IMR-90 (cell line): ENCODE measurements at regions of chr13 and their contacts with region 1.

Region 1: DNA sequence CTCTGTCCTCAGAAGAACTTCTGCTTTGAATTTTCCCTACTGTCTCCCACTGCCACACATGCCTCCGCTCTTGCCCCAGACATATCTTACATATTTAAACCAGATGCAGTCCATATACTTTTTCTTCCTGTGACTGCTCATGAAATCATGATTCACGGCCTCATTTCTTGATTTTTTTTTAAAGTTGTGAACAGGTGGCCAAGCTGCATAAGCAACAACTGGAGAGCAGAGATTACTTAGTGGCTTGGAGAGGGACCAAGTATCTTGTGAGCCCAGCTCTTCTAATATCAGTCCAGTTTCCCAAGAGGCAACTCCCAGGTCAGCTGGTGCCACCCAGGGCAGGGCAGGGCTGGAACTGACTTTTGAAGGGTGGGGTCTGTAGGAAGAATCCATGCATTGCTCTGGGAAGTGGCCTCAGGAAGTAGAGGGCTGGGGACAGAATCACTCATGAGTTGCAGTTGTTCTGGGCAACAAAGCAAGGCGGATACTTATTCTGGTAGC is 152.4 kb downstream of the LMO7 start:
- DNase-seq: peak; percentile 96
- ATAC-seq: peak; percentile 54
- H3K4me3 ChIP-seq: no peak overlapping the region
- H3K27ac ChIP-seq: peak overlapping the region; percentile 78
- H3K4me1 ChIP-seq: peaks cover 21% of the 10 kb centered on the region
- H3K27me3 ChIP-seq: no peaks in the 10 kb centered on the region
- CTCF ChIP-seq: no peak
- POLR2A ChIP-seq: no peak
- RAD21 ChIP-seq: no peak

Region 2: GRCh38 chr13:75825594-75825993 is 37.1 kb after region 1 on chr13:
- CTCF ChIA-PET with region 1: no interaction called
- POLR2A ChIA-PET with region 1: no interaction called
- dilution Hi-C with region 1: no loop called
- in situ Hi-C with region 1: no loop called
- intact Hi-C with region 1: no loop called
- DNase-seq: no peak
- ATAC-seq: no peak
- H3K4me3 ChIP-seq: no peak overlapping the region
- H3K27ac ChIP-seq: no peak overlapping the region
- H3K4me1 ChIP-seq: peaks cover 6% of the 10 kb centered on the region
- H3K27me3 ChIP-seq: no peaks in the 10 kb centered on the region
- CTCF ChIP-seq: no peak
- POLR2A ChIP-seq: no peak
- RAD21 ChIP-seq: no peak

Region 3: GRCh38 chr13:77002590-77003190 is 1214.2 kb after region 1 on chr13:
- CTCF ChIA-PET with region 1: no interaction called
- POLR2A ChIA-PET with region 1: interaction called, 11 read pairs
- dilution Hi-C with region 1: no loop called
- in situ Hi-C with region 1: no loop called
- intact Hi-C with region 1: no loop called
- DNase-seq: peak; percentile 48
- ATAC-seq: peak; percentile 67
- H3K4me3 ChIP-seq: no peak overlapping the region
- H3K27ac ChIP-seq: no peak overlapping the region
- H3K4me1 ChIP-seq: no peaks in the 10 kb centered on the region
- H3K27me3 ChIP-seq: no peaks in the 10 kb centered on the region
- CTCF ChIP-seq: peak; percentile 67
- POLR2A ChIP-seq: no peak
- RAD21 ChIP-seq: peak; percentile 52